Activated CD4-positive, alpha-beta memory T cell treated with anti-CD3 and anti-CD28 coated beads, Interleukin-2, amount 10 ng/mL, durations not matched to agents 7 days and 5 days (primary cell): ENCODE measurements at regions of chr5 and their contacts with region 1.

Region 1: GRCh38 chr5:78984439-78985115 is 533 bp downstream of the ARSB start:
- DNase-seq: peak; percentile 82
- H3K4me3 Mint-ChIP-seq: peak overlapping the region; percentile 78
- H3K27ac Mint-ChIP-seq: peak overlapping the region; percentile 91
- H3K4me1 Mint-ChIP-seq: peaks cover 45% of the 10 kb centered on the region
- H3K27me3 Mint-ChIP-seq: no peaks in the 10 kb centered on the region

Region 2: GRCh38 chr5:78359831-78360673 is 624.5 kb before region 1 on chr5 and contains the start of gene SCAMP1:
- CTCF ChIA-PET with region 1: interaction called, 3 read pairs
- POLR2A ChIA-PET with region 1: interaction called, 14 read pairs
- DNase-seq: peak; percentile 93
- H3K4me3 Mint-ChIP-seq: peak within 1 kb of the TSS; percentile 96
- H3K27ac Mint-ChIP-seq: peak within 1 kb of the TSS; percentile 92
- H3K4me1 Mint-ChIP-seq: peaks cover 31% of the 10 kb centered on the region
- H3K27me3 Mint-ChIP-seq: no peaks in the 10 kb centered on the region
- total RNA-seq, gene SCAMP1: 22.0 to 22.3 TPM

Region 3: DNA sequence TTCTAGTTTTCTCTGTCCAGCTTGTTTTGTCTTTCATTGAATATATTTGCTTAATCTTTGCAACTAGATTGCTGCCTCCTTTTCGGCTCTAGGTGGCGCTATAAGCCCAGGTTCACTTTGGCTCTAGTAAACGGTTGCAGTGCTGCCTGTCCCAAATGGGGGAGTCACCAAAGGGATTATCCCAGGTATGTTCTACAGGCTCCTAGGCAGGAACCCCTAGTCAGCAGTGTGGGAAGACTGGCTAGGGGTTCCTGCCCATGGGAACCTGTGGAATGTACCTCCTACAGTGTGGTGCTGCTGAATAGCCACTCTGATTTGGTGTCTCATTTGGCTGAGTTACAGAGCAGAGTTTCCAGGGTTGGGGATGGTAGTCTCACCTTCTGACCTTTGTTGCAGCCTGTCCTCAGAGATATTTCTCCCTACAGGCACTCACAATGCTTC is 84.6 kb before region 1 on chr5:
- CTCF ChIA-PET with region 1: interaction called, 12 read pairs
- POLR2A ChIA-PET with region 1: no interaction called
- DNase-seq: peak; percentile 51
- H3K4me3 Mint-ChIP-seq: no peak overlapping the region
- H3K27ac Mint-ChIP-seq: no peak overlapping the region
- H3K4me1 Mint-ChIP-seq: no peaks in the 10 kb centered on the region
- H3K27me3 Mint-ChIP-seq: no peaks in the 10 kb centered on the region

Region 4: GRCh38 chr5:78974011-78974410 is 10.6 kb before region 1 on chr5:
- CTCF ChIA-PET with region 1: interaction called, 3 read pairs
- POLR2A ChIA-PET with region 1: interaction called, 12 read pairs
- DNase-seq: no peak
- H3K4me3 Mint-ChIP-seq: no peak overlapping the region
- H3K27ac Mint-ChIP-seq: no peak overlapping the region
- H3K4me1 Mint-ChIP-seq: peaks cover 7% of the 10 kb centered on the region
- H3K27me3 Mint-ChIP-seq: no peaks in the 10 kb centered on the region

Region 5: GRCh38 chr5:79020861-79021561 is 36.4 kb after region 1 on chr5:
- CTCF ChIA-PET with region 1: interaction called, 14 read pairs
- POLR2A ChIA-PET with region 1: interaction called, 17 read pairs
- DNase-seq: peak; percentile 45
- H3K4me3 Mint-ChIP-seq: no peak overlapping the region
- H3K27ac Mint-ChIP-seq: no peak overlapping the region
- H3K4me1 Mint-ChIP-seq: peaks cover 3% of the 10 kb centered on the region
- H3K27me3 Mint-ChIP-seq: peaks cover 62% of the 10 kb centered on the region

Region 6: GRCh38 chr5:79133657-79134451 is 149.3 kb after region 1 on chr5:
- CTCF ChIA-PET with region 1: interaction called, 23 read pairs
- POLR2A ChIA-PET with region 1: interaction called, 6 read pairs
- DNase-seq: peak; percentile 69
- H3K4me3 Mint-ChIP-seq: peak overlapping the region; percentile 36
- H3K27ac Mint-ChIP-seq: peak overlapping the region; percentile 69
- H3K4me1 Mint-ChIP-seq: peaks cover 15% of the 10 kb centered on the region
- H3K27me3 Mint-ChIP-seq: no peaks in the 10 kb centered on the region

Region 7: DNA sequence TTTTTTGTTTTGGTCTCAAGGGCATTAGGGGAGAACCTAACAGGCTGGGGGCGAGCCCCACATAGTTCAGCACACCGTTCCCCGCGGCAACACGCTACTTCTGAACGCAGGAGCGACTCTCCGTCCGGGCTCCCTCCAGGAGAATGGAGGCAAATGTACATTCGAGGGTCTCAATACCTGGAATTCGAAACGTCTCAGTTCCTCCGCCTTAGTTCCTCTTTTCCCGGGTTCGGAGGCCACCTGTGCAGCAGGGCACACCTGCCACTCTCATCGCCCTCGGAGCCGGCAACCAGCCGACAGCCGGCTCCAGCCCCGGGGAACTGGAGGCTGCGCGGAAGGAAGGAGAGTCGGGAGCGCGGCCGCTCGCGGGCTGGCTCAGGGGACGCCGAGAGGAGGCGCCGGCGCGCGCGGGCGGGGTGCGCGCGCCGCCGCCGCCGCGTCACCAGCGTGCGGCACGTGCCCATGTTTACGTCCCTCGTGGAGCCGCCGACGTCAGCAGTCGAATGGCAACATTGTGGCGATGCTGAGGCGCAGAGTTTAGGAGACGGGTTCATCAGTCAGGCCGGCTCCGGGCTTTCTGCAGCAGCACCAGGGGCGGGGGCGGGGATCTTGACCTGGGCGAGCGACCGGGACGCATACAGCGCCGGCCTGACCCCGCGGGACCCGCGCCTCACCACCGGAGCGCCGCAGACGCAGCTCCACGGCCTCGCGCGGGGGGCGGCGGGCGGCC is 251.2 kb after region 1 on chr5 and contains the start of gene JMY:
- CTCF ChIA-PET with region 1: no interaction called
- POLR2A ChIA-PET with region 1: interaction called, 26 read pairs
- DNase-seq: peak; percentile 88
- H3K4me3 Mint-ChIP-seq: peak within 1 kb of the TSS; percentile 92
- H3K27ac Mint-ChIP-seq: peak within 1 kb of the TSS; percentile 90
- H3K4me1 Mint-ChIP-seq: peaks cover 27% of the 10 kb centered on the region
- H3K27me3 Mint-ChIP-seq: no peaks in the 10 kb centered on the region
- total RNA-seq, gene JMY: 8.5 to 9.0 TPM